CD14-positive monocyte (primary cell): ENCODE measurements at regions of chr21 and their contacts with region 1.

Region 1: GRCh38 chr21:36060159-36060921 is at the start of gene SETD4:
- DNase-seq: peak; percentile 94 to 95 (median 94)
- H3K4me3 ChIP-seq: peak within 1 kb of the TSS; percentile 68 to 89 (median 89)
- H3K4me3 Mint-ChIP-seq: peak within 1 kb of the TSS; percentile 92 to 96
- H3K27ac ChIP-seq: peak within 1 kb of the TSS; percentile 88 to 92
- H3K27ac Mint-ChIP-seq: peak within 1 kb of the TSS; percentile 91 to 98 (median 96)
- H3K4me1 ChIP-seq: peaks cover 15 to 22% of the 10 kb centered on the region in 2 donors
- H3K4me1 Mint-ChIP-seq: peaks cover 16% of the 10 kb centered on the region
- H3K27me3 ChIP-seq: no peaks in the 10 kb centered on the region
- H3K27me3 Mint-ChIP-seq: peaks cover 1 to 5% (median 3%) of the 10 kb centered on the region in 3 donors
- CTCF ChIP-seq: no peak
- polyA plus RNA-seq, gene SETD4: 4.1 to 10.8 (median 4.3) TPM

Region 2: GRCh38 chr21:35768187-35768586 is 292.2 kb before region 1 on chr21:
- intact Hi-C with region 1: no loop called
- DNase-seq: no peak
- H3K4me3 ChIP-seq: no peak overlapping the region
- H3K4me3 Mint-ChIP-seq: no peak overlapping the region
- H3K27ac ChIP-seq: no peak overlapping the region
- H3K27ac Mint-ChIP-seq: no peak overlapping the region
- H3K4me1 ChIP-seq: no peaks in the 10 kb centered on the region
- H3K4me1 Mint-ChIP-seq: no peaks in the 10 kb centered on the region
- H3K27me3 ChIP-seq: peaks cover 1 to 4% of the 10 kb centered on the region in 2 donors
- H3K27me3 Mint-ChIP-seq: peaks cover 3 to 10% (median 8%) of the 10 kb centered on the region in 3 donors
- CTCF ChIP-seq: no peak

Region 3: GRCh38 chr21:36113647-36114428 is 53.5 kb after region 1 on chr21:
- intact Hi-C with region 1: loop called (anchors 5 to 10 kb)
- DNase-seq: no peak
- H3K4me3 ChIP-seq: peak overlapping the region; percentile 8 to 57 (median 17)
- H3K4me3 Mint-ChIP-seq: peak overlapping the region in 1 of 2 donors; percentile 89
- H3K27ac ChIP-seq: no peak overlapping the region
- H3K27ac Mint-ChIP-seq: peak overlapping the region in 3 of 7 donors; percentile 10 to 66 (median 24)
- H3K4me1 ChIP-seq: peaks cover 10 to 20% of the 10 kb centered on the region in 2 donors
- H3K4me1 Mint-ChIP-seq: peaks cover 15% of the 10 kb centered on the region
- H3K27me3 ChIP-seq: no peaks in the 10 kb centered on the region
- H3K27me3 Mint-ChIP-seq: peaks cover 0 to 6% (median 1%) of the 10 kb centered on the region in 3 donors
- CTCF ChIP-seq: no peak

Region 4: DNA sequence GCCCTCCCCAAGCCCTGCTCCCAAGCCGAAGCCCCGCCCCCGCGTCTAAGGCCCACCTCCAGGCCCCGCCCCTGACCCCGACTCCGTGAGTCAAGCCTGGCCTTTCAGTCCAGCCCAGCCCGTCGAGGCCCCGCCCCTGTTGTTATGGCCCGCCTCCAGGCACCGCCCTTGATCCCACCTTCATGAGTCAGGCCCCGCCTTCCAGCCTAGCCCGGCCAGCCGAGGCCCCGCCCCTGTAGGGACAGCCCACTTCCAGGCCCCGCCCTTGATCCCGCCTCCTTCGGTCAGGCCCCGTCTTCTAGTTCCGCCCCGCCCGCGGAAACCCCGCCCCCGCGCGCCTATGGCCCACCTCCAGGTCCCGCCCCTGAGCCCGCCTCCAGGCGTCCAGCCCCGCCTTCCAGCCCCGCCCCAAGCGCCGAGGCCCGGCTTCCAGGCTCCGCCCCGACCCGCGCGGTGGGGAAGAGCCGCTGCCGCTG is 96.0 kb after region 1 on chr21:
- intact Hi-C with region 1: loop called in 1 of 2 experiments (anchors 5 kb)
- DNase-seq: peak; percentile 99
- H3K4me3 ChIP-seq: peak overlapping the region; percentile 73 to 90 (median 77)
- H3K4me3 Mint-ChIP-seq: peak overlapping the region; percentile 86 to 93
- H3K27ac ChIP-seq: peak overlapping the region; percentile 57 to 80
- H3K27ac Mint-ChIP-seq: peak overlapping the region in 4 of 7 donors; percentile 77 to 94 (median 90)
- H3K4me1 ChIP-seq: peaks cover 43 to 46% of the 10 kb centered on the region in 2 donors
- H3K4me1 Mint-ChIP-seq: peaks cover 52% of the 10 kb centered on the region
- H3K27me3 ChIP-seq: no peaks in the 10 kb centered on the region
- H3K27me3 Mint-ChIP-seq: peaks cover 1 to 3% (median 2%) of the 10 kb centered on the region in 3 donors
- CTCF ChIP-seq: no peak